Ovary (tissue), 10 donors: ENCODE measurements at regions of chr4 and their contacts with region 1.

Region 1: GRCh38 chr4:76341063-76341462 is 34.5 kb downstream of the STBD1 start:
- DNase-seq: no peak
- H3K4me3 ChIP-seq: no peak overlapping the region
- H3K27ac ChIP-seq: no peak overlapping the region
- H3K4me1 ChIP-seq: no peaks in the 10 kb centered on the region
- H3K27me3 ChIP-seq: no peaks in the 10 kb centered on the region
- CTCF ChIP-seq: no peak
- EP300 ChIP-seq: no peak
- POLR2A ChIP-seq: no peak

Region 2: DNA sequence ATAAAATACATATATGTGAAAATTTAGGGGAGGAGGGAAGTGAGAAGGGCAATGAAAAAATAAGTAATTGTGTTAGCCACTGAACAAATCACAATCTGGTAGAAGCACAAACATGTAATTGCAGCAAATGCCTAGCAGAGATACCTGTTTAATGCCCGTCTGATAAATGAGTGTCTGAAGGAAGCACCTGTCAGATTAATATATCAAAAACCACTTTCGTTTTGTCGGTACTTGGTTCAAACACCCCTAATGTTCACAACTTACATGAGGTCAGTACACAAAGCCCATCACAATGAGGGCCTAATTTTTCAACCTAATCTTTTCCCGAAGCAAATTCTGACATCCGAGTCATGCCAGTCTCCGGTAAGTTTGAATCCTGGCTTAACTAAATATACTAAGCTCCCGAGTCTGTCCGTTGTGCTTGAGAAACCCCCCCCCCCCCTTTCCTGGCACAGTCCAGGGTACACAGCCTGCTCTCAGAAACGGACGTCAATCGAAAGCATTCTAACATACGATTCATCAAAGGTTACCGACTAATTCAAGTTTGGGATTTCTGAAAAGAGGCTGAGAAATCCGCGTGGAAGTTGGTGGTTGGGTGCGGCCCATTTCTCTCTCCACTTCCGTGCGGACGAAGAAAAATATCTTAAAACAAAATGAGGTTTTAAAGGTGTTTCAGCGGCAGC is 351.1 kb before region 1 on chr4:
- intact Hi-C with region 1: no loop called
- DNase-seq: no peak
- H3K4me3 ChIP-seq: peak overlapping the region; percentile 72
- H3K27ac ChIP-seq: no peak overlapping the region
- H3K4me1 ChIP-seq: peaks cover 5% of the 10 kb centered on the region
- H3K27me3 ChIP-seq: no peaks in the 10 kb centered on the region
- CTCF ChIP-seq: no peak
- EP300 ChIP-seq: no peak
- POLR2A ChIP-seq: no peak

Region 3: DNA sequence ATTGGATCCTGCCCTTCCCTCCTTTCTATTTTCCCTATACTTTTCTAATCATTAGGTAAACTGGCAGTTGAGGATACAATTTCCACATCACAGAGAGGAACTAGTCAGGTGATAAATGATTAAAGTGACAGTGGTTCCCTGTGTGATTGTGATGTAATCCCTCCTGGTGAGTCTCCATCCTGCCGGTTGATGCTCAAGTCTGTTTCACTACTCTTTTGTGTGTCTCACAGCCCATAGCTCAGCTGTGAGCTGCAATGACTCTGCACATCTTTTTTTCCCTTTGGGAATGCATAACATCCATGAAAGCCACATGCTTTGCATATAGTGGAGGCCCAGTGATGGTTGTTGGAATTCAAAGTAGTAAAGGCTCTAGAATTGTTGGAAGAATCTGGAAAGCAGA is 674.3 kb after region 1 on chr4:
- intact Hi-C with region 1: loop called in 1 of 4 experiments (anchors 5 kb)
- DNase-seq: no peak
- H3K4me3 ChIP-seq: no peak overlapping the region
- H3K27ac ChIP-seq: no peak overlapping the region
- H3K4me1 ChIP-seq: peaks cover 8% of the 10 kb centered on the region
- H3K27me3 ChIP-seq: no peaks in the 10 kb centered on the region
- CTCF ChIP-seq: no peak
- EP300 ChIP-seq: no peak
- POLR2A ChIP-seq: no peak